GM18951 (cell line): ENCODE measurements at regions of chr3 and their contacts with region 1.

Region 1: DNA sequence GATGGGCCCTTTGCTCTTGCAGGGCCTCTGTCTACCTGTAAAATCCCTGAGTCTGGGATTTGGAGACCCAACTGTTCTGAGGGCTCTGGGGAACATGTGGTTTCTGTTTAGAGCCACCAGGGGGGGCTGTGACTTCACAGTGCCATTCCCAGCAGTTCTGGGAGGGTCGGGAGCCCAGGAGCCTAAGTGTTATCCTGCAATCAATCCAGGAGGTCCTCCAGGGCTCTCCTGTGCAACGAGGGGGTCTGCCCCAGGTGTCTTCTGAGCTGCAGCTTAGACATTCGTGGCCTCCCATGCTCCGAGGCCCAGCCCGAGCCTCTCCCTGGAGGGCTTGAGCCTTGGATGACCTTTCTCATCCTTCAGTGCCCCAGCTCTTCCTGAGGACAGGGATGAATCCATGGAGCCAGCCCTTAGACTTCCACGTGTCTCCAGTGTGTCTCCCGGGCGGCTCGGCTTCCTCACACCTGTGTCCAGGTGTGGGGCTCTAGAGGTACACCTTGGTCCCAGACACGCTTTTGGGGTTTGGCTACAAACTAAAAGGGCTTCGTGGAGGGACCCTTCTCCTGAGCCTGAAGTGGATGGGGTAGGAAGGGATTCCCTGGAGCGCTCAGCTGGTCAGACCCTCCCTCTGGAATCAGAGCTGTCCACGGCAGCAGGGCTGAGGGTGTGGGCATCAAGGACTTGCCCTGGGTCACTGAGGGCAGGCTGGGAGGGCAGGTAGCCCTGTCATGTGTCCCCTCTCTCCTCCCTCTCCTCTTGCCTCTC is 20.3 kb upstream of the ABTB1 start:
- POLR2A ChIP-seq: no peak

Region 2: DNA sequence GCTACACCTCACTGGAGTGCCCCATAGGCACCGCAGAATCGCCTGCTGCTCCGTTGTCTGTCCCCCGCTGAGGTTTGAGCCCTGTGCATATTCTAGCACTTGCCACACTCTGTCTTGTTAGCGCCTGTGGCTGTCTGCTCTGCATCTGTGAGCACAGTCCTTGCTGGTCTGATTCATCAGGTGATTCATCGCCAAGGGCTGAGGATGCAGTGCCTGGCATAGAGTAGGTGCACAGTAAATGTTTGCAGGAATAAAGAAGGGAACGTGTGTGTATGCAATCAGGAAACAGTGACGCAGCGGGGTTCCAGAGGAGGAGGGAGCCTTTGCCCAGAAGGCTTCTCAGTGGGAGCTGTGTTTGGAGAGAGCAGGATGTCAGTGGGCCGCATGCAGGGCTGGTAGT is 793.5 kb before region 1 on chr3:
- in situ Hi-C with region 1: no loop called
- POLR2A ChIP-seq: no peak

Region 3: GRCh38 chr3:127959846-127960245 is 307.4 kb after region 1 on chr3:
- in situ Hi-C with region 1: loop called (anchors 10 kb)
- POLR2A ChIP-seq: no peak